ENCODE measurements at regions of chr2 and their contacts with region 1.

Region 1: GRCh38 chr2:3461801-3462492 is 57.4 kb downstream of the ADI1 start:
- DNase-seq: no peak
- ATAC-seq: peak; percentile 80
- H3K4me3 Mint-ChIP-seq: peak overlapping the region; percentile 70
- H3K27ac Mint-ChIP-seq: peak overlapping the region; percentile 90
- H3K4me1 Mint-ChIP-seq: peaks cover 13% of the 10 kb centered on the region
- H3K27me3 Mint-ChIP-seq: no peaks in the 10 kb centered on the region
- CTCF ChIP-seq: peak; percentile 93

Region 2: DNA sequence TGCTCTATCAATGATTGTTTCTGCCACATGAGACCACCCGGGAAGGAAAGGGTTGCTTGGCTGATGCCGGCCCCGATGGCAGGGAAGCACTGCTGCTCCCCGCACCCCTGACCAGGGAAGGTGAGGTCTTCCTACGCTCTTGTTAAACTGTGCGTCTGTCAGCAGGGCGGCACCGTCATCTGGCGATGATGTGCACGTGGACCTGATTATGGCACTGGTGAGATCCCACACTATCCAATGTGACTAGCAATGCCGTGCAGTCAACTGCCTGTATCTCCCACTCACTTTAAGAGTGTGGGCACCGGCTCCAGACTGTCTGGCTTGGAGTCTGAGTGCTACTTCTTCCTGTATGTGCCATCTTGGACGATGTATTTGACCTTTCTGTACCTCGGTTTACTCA is 1340.1 kb before region 1 on chr2:
- CTCF ChIA-PET with region 1: no interaction called
- POLR2A ChIA-PET with region 1: no interaction called
- intact Hi-C with region 1: loop called (anchors 5 kb)
- DNase-seq: no peak
- ATAC-seq: no peak
- H3K4me3 Mint-ChIP-seq: no peak overlapping the region
- H3K27ac Mint-ChIP-seq: no peak overlapping the region
- H3K4me1 Mint-ChIP-seq: peaks cover 4% of the 10 kb centered on the region
- H3K27me3 Mint-ChIP-seq: no peaks in the 10 kb centered on the region
- CTCF ChIP-seq: no peak

Region 3: DNA sequence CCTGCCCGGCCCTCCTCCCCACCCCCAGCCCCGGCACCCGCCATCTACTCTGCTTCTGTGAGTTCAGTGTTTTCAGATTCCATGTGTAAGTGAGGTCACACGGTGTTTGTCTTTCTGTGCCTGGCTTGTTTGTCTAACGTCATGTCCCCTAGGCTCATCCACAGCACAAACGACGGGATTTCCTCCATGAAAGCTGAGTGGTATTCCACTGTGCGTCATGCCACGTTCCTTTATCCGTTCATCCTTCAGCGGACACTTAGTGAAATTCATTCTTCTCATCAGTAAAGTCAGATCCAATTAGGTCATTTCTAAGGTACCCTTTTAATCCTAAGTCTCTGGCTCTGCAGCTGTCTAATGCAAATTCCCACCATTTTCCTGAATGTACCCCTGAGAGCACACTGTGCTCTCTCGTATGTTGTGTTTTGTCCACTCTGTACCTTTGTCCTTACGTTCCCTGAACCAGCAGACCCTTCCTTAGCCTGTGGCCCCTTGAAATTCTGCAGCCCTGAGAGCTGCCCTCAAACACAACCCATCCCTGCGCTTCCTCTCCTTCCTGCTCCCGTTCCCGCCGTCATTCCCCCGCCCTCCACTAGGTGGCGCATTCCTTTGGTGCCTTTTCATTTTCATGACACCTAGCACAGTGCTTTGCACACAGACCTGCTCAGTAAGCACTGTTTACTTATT is 38.3 kb before region 1 on chr2:
- CTCF ChIA-PET with region 1: interaction called, 15 read pairs
- POLR2A ChIA-PET with region 1: no interaction called
- intact Hi-C with region 1: loop called (anchors 1 kb)
- DNase-seq: peak; percentile 64
- ATAC-seq: peak; percentile 75
- H3K4me3 Mint-ChIP-seq: no peak overlapping the region
- H3K27ac Mint-ChIP-seq: no peak overlapping the region
- H3K4me1 Mint-ChIP-seq: peaks cover 16% of the 10 kb centered on the region
- H3K27me3 Mint-ChIP-seq: no peaks in the 10 kb centered on the region
- CTCF ChIP-seq: peak; percentile 78

Region 4: GRCh38 chr2:3518496-3519254 is 56.7 kb after region 1 on chr2:
- CTCF ChIA-PET with region 1: no interaction called
- POLR2A ChIA-PET with region 1: no interaction called
- intact Hi-C with region 1: loop called (anchors 2 kb)
- DNase-seq: peak; percentile 98
- ATAC-seq: peak; percentile 76
- H3K4me3 Mint-ChIP-seq: peak overlapping the region; percentile 85
- H3K27ac Mint-ChIP-seq: peak overlapping the region; percentile 91
- H3K4me1 Mint-ChIP-seq: peaks cover 38% of the 10 kb centered on the region
- H3K27me3 Mint-ChIP-seq: no peaks in the 10 kb centered on the region
- CTCF ChIP-seq: no peak

Region 5: GRCh38 chr2:3558205-3559014 is 96.5 kb after region 1 on chr2 and contains the start of gene RNASEH1:
- CTCF ChIA-PET with region 1: no interaction called
- POLR2A ChIA-PET with region 1: interaction called, 4 read pairs
- intact Hi-C with region 1: loop called (anchors 1 kb)
- DNase-seq: peak; percentile 99
- ATAC-seq: peak; percentile 95
- H3K4me3 Mint-ChIP-seq: peak within 1 kb of the TSS; percentile 91
- H3K27ac Mint-ChIP-seq: peak within 1 kb of the TSS; percentile 97
- H3K4me1 Mint-ChIP-seq: peaks cover 45% of the 10 kb centered on the region
- H3K27me3 Mint-ChIP-seq: no peaks in the 10 kb centered on the region
- CTCF ChIP-seq: no peak
- total RNA-seq, gene RNASEH1: 27.4 and 28.5 TPM in 2 replicates

Measured in activated B cell treated with CpG ODN at 0.5 μM for 24 hours (primary cell).